ENCODE measurements at regions of chr7 and their contacts with region 1.

Region 1: GRCh38 chr7:98878365-98879165 is at the start of gene TRRAP:
- DNase-seq: no peak
- ATAC-seq: peak; percentile 92
- H3K4me3 ChIP-seq: peak within 1 kb of the TSS; percentile 100
- H3K27ac ChIP-seq: peak within 1 kb of the TSS; percentile 90
- H3K4me1 ChIP-seq: peaks cover 5% of the 10 kb centered on the region; the same call in 1 of the 2 replicates
- H3K27me3 ChIP-seq: no peaks in the 10 kb centered on the region
- CTCF ChIP-seq: peak; percentile 64 to 85 (median 73); a peak in 5 of 6 replicates
- EP300 ChIP-seq: no peak
- POLR2A ChIP-seq: peak; percentile 84
- RAD21 ChIP-seq: no peak
- polyA plus RNA-seq, gene TRRAP: 1.1 to 1.7 TPM

Region 2: DNA sequence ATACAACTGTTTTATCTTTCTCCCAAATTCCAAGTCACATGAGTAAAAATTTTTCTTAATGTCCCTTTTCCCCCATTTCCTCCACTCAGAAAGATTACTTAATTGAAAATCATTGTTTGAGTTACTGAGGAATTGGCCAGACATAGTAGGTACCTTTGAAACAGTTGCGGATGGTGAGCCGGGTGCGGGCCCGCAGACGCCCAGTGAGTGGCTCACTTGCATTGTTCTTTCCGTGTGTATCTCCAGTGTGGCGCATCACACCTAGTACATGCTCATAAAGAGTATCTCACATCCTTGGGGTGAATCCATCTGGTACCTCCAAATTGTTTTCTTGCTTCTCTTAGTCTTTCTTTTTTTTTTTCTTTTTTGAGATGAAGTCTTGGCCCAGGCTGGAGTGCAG is 14.0 kb after region 1 on chr7:
- CTCF ChIA-PET with region 1: interaction called, 29 read pairs
- POLR2A ChIA-PET with region 1: interaction called, 3 read pairs
- RAD21 ChIA-PET with region 1: no interaction called
- SMC1A ChIA-PET with region 1: interaction called, 3 read pairs
- in situ Hi-C with region 1: no loop called
- intact Hi-C with region 1: no loop called
- DNase-seq: no peak
- ATAC-seq: no peak
- H3K4me3 ChIP-seq: no peak overlapping the region
- H3K27ac ChIP-seq: no peak overlapping the region
- H3K4me1 ChIP-seq: no peaks in the 10 kb centered on the region
- H3K27me3 ChIP-seq: no peaks in the 10 kb centered on the region
- CTCF ChIP-seq: no peak
- EP300 ChIP-seq: no peak
- POLR2A ChIP-seq: no peak
- RAD21 ChIP-seq: no peak

Region 3: DNA sequence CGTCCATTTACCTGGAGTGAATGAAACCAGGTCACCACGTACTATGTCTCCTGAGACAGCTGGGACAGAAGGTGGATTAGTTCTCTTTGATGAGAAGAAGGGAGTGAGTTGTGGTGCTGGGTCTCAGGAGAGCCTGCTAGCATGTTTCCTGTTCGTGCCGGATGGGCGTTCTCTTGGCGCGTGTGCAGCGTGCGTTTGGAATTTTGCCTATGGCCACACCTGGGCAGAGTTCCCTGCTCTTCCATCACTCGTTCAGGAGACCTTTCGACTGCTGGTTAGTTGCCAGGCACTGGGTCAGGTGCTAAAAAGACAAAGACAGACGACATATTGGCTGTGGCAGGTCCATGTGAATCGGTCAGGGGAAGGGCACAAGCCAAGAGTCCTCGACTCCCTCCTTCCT is 90.1 kb after region 1 on chr7:
- CTCF ChIA-PET with region 1: no interaction called
- POLR2A ChIA-PET with region 1: no interaction called
- RAD21 ChIA-PET with region 1: no interaction called
- SMC1A ChIA-PET with region 1: no interaction called
- in situ Hi-C with region 1: no loop called
- intact Hi-C with region 1: no loop called
- DNase-seq: no peak
- ATAC-seq: no peak
- H3K4me3 ChIP-seq: no peak overlapping the region
- H3K27ac ChIP-seq: no peak overlapping the region
- H3K4me1 ChIP-seq: no peaks in the 10 kb centered on the region
- H3K27me3 ChIP-seq: no peaks in the 10 kb centered on the region
- CTCF ChIP-seq: no peak
- EP300 ChIP-seq: no peak
- POLR2A ChIP-seq: no peak
- RAD21 ChIP-seq: no peak